Activated CD4-positive, alpha-beta memory T cell treated with anti-CD3 and anti-CD28 coated beads for 36 hours (primary cell): ENCODE measurements at regions of chr4 and their contacts with region 1.

Region 1: GRCh38 chr4:122577808-122578781 is 42.8 kb downstream of the IL21 start:
- DNase-seq: peak; percentile 80
- H3K4me3 Mint-ChIP-seq: peak overlapping the region; percentile 62
- H3K27ac Mint-ChIP-seq: peak overlapping the region; percentile 90
- H3K4me1 Mint-ChIP-seq: peaks cover 56% of the 10 kb centered on the region
- H3K27me3 Mint-ChIP-seq: no peaks in the 10 kb centered on the region

Region 2: GRCh38 chr4:121823505-121824170 is 754.5 kb before region 1 on chr4 and contains the start of gene CCNA2:
- CTCF ChIA-PET with region 1: no interaction called
- POLR2A ChIA-PET with region 1: no interaction called
- intact Hi-C with region 1: loop called (anchors 5 kb)
- DNase-seq: peak; percentile 99
- H3K4me3 Mint-ChIP-seq: peak within 1 kb of the TSS; percentile 97
- H3K27ac Mint-ChIP-seq: peak within 1 kb of the TSS; percentile 81
- H3K4me1 Mint-ChIP-seq: peaks cover 25% of the 10 kb centered on the region
- H3K27me3 Mint-ChIP-seq: no peaks in the 10 kb centered on the region
- total RNA-seq, gene CCNA2: 98.2 to 100 TPM

Region 3: GRCh38 chr4:121998002-121998401 is 580.1 kb before region 1 on chr4:
- CTCF ChIA-PET with region 1: interaction called, 3 read pairs
- POLR2A ChIA-PET with region 1: no interaction called
- intact Hi-C with region 1: loop called (anchors 5 kb)
- DNase-seq: peak; percentile 13
- H3K4me3 Mint-ChIP-seq: no peak overlapping the region
- H3K27ac Mint-ChIP-seq: no peak overlapping the region
- H3K4me1 Mint-ChIP-seq: no peaks in the 10 kb centered on the region
- H3K27me3 Mint-ChIP-seq: peaks cover 6% of the 10 kb centered on the region

Region 4: GRCh38 chr4:122300776-122301175 is 277.3 kb before region 1 on chr4:
- CTCF ChIA-PET with region 1: interaction called, 14 read pairs
- POLR2A ChIA-PET with region 1: interaction called, 3 read pairs
- intact Hi-C with region 1: no loop called
- DNase-seq: no peak
- H3K4me3 Mint-ChIP-seq: no peak overlapping the region
- H3K27ac Mint-ChIP-seq: no peak overlapping the region
- H3K4me1 Mint-ChIP-seq: no peaks in the 10 kb centered on the region
- H3K27me3 Mint-ChIP-seq: no peaks in the 10 kb centered on the region

Region 5: GRCh38 chr4:122379239-122379638 is 198.9 kb before region 1 on chr4:
- CTCF ChIA-PET with region 1: no interaction called
- POLR2A ChIA-PET with region 1: no interaction called
- intact Hi-C with region 1: no loop called
- DNase-seq: no peak
- H3K4me3 Mint-ChIP-seq: no peak overlapping the region
- H3K27ac Mint-ChIP-seq: no peak overlapping the region
- H3K4me1 Mint-ChIP-seq: no peaks in the 10 kb centered on the region
- H3K27me3 Mint-ChIP-seq: no peaks in the 10 kb centered on the region

Region 6: DNA sequence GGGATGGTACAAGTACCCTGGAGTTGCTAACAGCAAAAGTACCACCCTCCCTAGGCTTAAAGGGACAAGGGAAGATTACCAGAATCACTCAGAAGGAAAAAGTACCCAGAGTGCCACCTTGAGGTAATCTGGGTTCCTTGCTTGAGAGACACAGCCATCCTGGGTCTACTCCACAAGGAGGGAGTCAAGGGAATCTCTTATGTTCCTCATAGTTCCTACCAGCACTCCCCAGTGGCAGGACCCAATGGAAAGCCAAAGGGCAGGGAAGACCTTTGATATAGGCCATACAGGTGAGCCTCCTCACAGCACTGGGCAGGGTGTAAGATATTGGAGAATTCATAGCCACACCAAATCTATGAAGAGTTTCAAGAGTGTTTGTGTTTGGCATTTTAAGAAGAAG is 127.2 kb before region 1 on chr4:
- CTCF ChIA-PET with region 1: interaction called, 35 read pairs
- POLR2A ChIA-PET with region 1: interaction called, 26 read pairs
- intact Hi-C with region 1: no loop called
- DNase-seq: peak; percentile 34
- H3K4me3 Mint-ChIP-seq: no peak overlapping the region
- H3K27ac Mint-ChIP-seq: peak overlapping the region; percentile 88
- H3K4me1 Mint-ChIP-seq: peaks cover 33% of the 10 kb centered on the region
- H3K27me3 Mint-ChIP-seq: no peaks in the 10 kb centered on the region

Region 7: DNA sequence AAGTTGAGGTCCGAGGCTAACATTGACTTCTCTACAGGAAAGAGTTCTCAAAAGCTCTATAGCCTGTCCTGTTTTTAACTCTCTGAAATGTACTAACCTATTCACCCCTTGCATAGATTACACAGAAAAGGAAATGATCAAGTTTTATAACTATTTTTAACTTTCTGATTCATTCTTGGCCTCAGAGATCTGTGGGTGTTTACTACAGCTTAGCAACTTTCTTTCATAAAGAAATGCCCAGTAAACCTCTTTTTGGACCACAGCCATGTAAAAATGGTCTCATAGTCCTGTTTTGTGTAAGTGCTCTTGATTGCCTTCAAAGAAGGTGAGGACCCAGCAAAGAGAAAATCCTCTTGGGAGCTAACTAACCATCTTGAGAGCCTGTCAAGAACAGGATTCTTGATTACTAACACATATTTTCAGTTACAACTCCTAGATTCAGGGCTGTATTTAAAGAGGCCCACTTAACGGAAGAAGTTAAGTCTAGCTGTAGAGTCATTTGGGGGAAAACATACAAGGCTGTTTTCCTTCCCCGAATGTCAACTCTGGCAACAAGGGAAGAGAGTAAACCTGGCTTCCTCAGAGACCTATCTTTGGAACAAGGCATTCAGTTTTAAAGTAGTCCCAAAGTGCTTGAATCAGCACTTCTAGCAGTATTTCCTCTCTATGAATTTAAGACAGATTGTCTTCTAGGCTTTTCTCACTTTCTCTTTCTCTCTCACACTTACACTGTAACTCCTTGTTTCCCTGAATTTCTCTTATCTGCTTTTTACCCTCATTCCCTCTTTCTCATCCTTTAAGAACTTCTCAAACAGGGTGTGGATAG is 35.5 kb before region 1 on chr4:
- CTCF ChIA-PET with region 1: interaction called, 29 read pairs
- POLR2A ChIA-PET with region 1: interaction called, 9 read pairs
- intact Hi-C with region 1: loop called (anchors 1 kb)
- DNase-seq: no peak
- H3K4me3 Mint-ChIP-seq: peak overlapping the region; percentile 62
- H3K27ac Mint-ChIP-seq: peak overlapping the region; percentile 97
- H3K4me1 Mint-ChIP-seq: peaks cover 93% of the 10 kb centered on the region
- H3K27me3 Mint-ChIP-seq: no peaks in the 10 kb centered on the region

Region 8: DNA sequence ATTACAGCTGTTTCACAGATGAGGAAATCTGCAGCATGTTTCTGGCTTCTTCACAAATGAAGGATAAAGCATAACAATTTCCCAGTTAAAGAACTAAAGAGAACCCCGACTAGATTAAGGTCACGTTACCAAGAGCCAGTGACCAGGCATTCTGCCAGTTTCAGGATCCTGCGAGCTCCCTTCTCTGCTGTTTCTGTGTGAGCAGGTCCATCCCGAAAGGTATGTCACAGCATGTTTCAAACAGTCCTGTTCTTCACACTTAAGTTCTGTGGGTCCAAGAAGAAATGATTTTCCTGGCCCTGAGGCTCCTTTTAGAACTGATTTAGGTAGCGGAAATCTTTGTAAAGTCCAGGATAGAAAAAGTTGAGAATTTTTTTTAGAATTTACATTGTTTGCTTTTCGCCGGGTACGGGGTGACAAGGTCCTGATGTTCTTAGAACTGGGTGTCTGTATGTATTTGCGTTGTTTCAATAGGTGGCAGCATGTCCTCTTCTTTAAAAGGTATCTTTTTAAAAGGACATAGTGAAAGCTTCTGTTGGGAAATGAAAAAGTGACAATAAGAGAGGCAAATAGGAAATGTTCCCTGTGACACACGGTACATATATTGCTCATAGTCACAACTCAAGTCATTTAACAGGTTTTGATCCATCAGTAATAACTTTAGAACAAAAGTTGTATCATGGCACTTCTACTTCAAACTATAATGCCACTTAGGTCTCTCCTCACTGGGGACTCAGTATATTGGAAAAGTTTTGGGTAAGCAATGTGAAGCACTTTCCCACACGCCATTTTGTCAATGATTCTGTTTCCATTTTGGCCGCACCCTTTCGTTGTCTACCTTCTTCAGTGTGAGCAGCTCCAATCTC is 24.4 kb after region 1 on chr4:
- CTCF ChIA-PET with region 1: interaction called, 13 read pairs
- POLR2A ChIA-PET with region 1: no interaction called
- intact Hi-C with region 1: no loop called
- DNase-seq: no peak
- H3K4me3 Mint-ChIP-seq: peak overlapping the region; percentile 11
- H3K27ac Mint-ChIP-seq: peak overlapping the region; percentile 38
- H3K4me1 Mint-ChIP-seq: peaks cover 25% of the 10 kb centered on the region
- H3K27me3 Mint-ChIP-seq: peaks cover 7% of the 10 kb centered on the region